Aorta (tissue), 5 donors: ENCODE measurements at regions of chr1 and their contacts with region 1.

Region 1: DNA sequence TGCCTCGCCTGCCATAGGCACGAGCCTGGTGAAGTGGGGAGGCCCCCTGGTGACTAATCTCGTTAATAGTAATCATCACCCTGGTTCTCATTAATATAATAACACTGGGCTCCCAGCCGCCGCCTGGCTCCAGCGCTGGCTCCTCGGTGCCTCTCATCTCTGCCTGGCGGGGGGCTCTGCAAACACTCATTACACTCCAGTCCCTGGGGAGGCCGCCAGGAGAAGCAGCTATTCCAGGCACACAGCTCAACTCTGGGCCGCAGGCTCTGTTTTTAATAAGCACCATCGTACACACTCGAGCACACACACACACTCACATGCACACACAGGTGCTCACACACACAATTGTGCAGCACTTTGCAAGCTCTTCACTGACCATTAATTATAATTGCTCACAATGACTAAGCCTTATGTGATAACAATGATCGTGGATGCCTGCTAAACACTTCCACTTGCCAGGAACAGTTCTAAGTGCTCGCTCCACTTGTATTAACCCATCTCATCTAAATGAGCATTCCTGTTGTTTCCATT is 52.2 kb downstream of the SDC3 start:
- DNase-seq: peak in 1 of 2 donors; percentile 73
- ATAC-seq: no peak
- H3K4me3 ChIP-seq: no peak overlapping the region
- H3K27ac ChIP-seq: no peak overlapping the region
- H3K4me1 ChIP-seq: no peaks in the 10 kb centered on the region
- H3K27me3 ChIP-seq: no peaks in the 10 kb centered on the region

Region 2: DNA sequence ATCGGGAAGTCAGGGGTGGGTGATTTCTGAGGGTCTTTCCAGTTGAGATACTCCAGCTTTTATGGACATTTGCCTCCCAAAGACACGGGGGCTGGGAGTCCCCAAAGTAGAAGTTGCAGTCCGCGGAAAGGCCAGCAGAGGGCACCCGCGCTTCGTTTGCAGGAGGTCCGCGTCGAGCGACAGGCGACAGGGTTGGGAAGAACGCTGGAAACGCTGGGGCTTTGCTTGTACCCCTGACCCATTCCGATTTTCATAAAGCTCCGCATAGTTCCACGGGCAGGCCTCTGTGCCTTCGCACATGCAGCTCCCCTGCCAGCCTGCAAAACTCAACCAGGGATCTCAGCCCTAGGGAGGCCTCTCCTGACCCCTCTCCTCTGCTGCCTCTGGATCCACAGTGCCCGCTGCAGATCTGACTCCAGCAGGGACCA is 54.5 kb before region 1 on chr1:
- intact Hi-C with region 1: no loop called
- DNase-seq: peak; percentile 86 to 95
- ATAC-seq: peak; percentile 83
- H3K4me3 ChIP-seq: no peak overlapping the region
- H3K27ac ChIP-seq: no peak overlapping the region
- H3K4me1 ChIP-seq: no peaks in the 10 kb centered on the region
- H3K27me3 ChIP-seq: no peaks in the 10 kb centered on the region

Region 3: GRCh38 chr1:30877205-30877912 is 21.0 kb after region 1 on chr1:
- intact Hi-C with region 1: loop called in 1 of 2 experiments (anchors 1 kb)
- DNase-seq: peak; percentile 89 to 91
- ATAC-seq: peak; percentile 79
- H3K4me3 ChIP-seq: no peak overlapping the region
- H3K27ac ChIP-seq: no peak overlapping the region
- H3K4me1 ChIP-seq: no peaks in the 10 kb centered on the region
- H3K27me3 ChIP-seq: no peaks in the 10 kb centered on the region